Panc1 (cell line): ENCODE measurements at regions of chr5 and their contacts with region 1.

Region 1: DNA sequence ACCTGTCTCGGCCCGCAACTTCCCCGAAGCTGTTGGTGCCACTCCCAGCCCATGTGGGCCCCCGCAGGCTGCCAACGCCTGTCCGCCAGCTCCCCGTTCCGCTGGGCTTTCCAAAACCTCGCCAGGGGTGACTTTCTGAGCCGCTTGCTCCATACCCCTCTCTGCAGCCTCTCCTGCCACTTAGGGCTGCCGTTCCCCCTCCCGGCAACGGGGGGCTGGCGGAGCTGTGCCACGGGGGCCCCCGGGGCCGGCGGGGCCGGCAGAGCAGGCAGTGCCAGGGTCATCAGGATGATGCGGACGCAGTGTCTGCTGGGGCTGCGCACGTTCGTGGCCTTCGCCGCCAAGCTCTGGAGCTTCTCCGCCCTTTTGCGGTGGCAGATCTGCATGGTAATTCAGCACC is 40.8 kb downstream of the FCHO2 start:
- DNase-seq: no peak
- ATAC-seq: no peak
- H3K4me3 ChIP-seq: no peak overlapping the region
- H3K27ac ChIP-seq: no peak overlapping the region
- H3K4me1 ChIP-seq: no peaks in the 10 kb centered on the region
- H3K27me3 ChIP-seq: no peaks in the 10 kb centered on the region
- CTCF ChIP-seq: no peak

Region 2: GRCh38 chr5:72744136-72744535 is 252.5 kb before region 1 on chr5:
- CTCF ChIA-PET with region 1: no interaction called
- POLR2A ChIA-PET with region 1: no interaction called
- in situ Hi-C with region 1: no loop called
- intact Hi-C with region 1: no loop called
- DNase-seq: no peak
- ATAC-seq: no peak
- H3K4me3 ChIP-seq: no peak overlapping the region
- H3K27ac ChIP-seq: no peak overlapping the region
- H3K4me1 ChIP-seq: no peaks in the 10 kb centered on the region
- H3K27me3 ChIP-seq: no peaks in the 10 kb centered on the region
- CTCF ChIP-seq: no peak

Region 3: GRCh38 chr5:73019766-73020165 is 23.1 kb after region 1 on chr5:
- CTCF ChIA-PET with region 1: no interaction called
- POLR2A ChIA-PET with region 1: interaction called, 10 read pairs
- in situ Hi-C with region 1: no loop called
- intact Hi-C with region 1: no loop called
- DNase-seq: no peak
- ATAC-seq: no peak
- H3K4me3 ChIP-seq: no peak overlapping the region
- H3K27ac ChIP-seq: no peak overlapping the region
- H3K4me1 ChIP-seq: no peaks in the 10 kb centered on the region
- H3K27me3 ChIP-seq: no peaks in the 10 kb centered on the region
- CTCF ChIP-seq: no peak